Calu3 (cell line): ENCODE measurements at regions of chr12 and their contacts with region 1.

Region 1: DNA sequence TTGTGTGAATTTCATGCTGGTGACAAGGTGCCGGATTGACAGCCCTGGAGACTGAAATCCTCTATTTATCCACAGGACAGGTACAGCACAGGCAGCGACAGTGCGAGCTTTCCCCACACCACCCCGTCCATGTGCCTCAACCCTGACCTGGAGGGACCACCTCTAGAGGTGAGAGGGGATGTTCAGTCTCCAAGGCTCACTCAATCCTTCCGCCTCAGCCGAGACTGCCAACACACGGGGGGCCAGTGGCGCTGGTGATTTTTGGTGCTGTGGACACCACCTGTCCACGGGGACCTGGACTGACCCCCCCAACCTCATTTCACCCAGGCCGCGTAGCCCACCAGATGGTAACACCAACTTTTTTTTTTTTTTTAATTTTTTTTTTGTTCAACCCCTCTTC is 12.8 kb downstream of the PCBP2 start:
- DNase-seq: no peak
- H3K4me3 Mint-ChIP-seq: no peak overlapping the region
- H3K27ac Mint-ChIP-seq: no peak overlapping the region
- H3K4me1 Mint-ChIP-seq: peaks cover 8% of the 10 kb centered on the region
- H3K27me3 Mint-ChIP-seq: no peaks in the 10 kb centered on the region
- CTCF ChIP-seq: no peak

Region 2: GRCh38 chr12:53355121-53355520 is 109.6 kb before region 1 on chr12:
- CTCF ChIA-PET with region 1: no interaction called
- intact Hi-C with region 1: no loop called
- DNase-seq: no peak
- H3K4me3 Mint-ChIP-seq: no peak overlapping the region
- H3K27ac Mint-ChIP-seq: no peak overlapping the region
- H3K4me1 Mint-ChIP-seq: peaks cover 9% of the 10 kb centered on the region
- H3K27me3 Mint-ChIP-seq: no peaks in the 10 kb centered on the region
- CTCF ChIP-seq: no peak

Region 3: GRCh38 chr12:53427905-53428594 is 36.6 kb before region 1 on chr12:
- CTCF ChIA-PET with region 1: no interaction called
- intact Hi-C with region 1: no loop called
- DNase-seq: no peak
- H3K4me3 Mint-ChIP-seq: no peak overlapping the region
- H3K27ac Mint-ChIP-seq: no peak overlapping the region
- H3K4me1 Mint-ChIP-seq: peaks cover 16% of the 10 kb centered on the region
- H3K27me3 Mint-ChIP-seq: no peaks in the 10 kb centered on the region
- CTCF ChIP-seq: no peak

Region 4: GRCh38 chr12:53500776-53501614 is 36.3 kb after region 1 on chr12 and contains the start of gene TARBP2:
- CTCF ChIA-PET with region 1: interaction called, 11 read pairs
- intact Hi-C with region 1: no loop called
- DNase-seq: peak; percentile 93
- H3K4me3 Mint-ChIP-seq: peak within 1 kb of the TSS; percentile 76
- H3K27ac Mint-ChIP-seq: peak within 1 kb of the TSS; percentile 62
- H3K4me1 Mint-ChIP-seq: peaks cover 25% of the 10 kb centered on the region
- H3K27me3 Mint-ChIP-seq: peaks cover 10% of the 10 kb centered on the region
- CTCF ChIP-seq: no peak
- total RNA-seq, gene TARBP2: 20.7 and 21.8 TPM in 2 replicates